ENCODE measurements at regions of chr4 and their contacts with region 1.

Region 1: DNA sequence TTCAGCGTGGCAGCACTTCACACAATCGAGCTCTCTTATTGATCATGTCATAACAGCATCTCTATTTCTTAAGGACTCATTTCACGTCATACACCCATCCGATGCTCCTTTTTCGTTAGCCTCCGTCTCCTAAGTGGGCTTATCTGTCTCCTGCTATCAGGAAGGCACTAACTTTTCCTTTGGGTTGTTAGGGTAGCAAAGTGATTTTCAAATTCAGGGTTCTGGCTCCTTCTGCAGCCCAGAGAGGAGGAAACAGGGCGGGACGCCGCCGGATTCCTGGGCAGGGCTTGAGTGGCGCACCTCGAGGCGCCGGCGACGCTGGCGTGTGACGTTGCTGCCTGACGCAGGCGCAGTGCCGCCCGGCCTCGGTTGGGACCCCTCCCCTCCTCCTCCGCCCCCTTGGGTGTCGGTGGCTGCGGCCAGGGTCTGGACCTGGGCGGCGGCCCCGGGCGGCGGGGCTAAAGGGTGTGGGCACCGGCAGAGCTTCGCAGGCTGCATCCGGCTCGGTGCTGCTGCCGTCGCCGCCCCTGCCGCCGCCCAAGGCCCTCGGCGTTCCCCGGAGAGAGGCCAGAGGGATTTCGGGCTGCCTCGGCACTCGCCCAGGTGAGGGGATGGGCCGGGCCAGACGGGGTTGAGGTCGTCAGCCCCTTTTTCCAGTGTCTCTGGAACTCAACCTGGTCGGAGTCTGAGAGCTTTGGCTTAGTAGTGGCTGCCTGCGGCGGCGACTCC is at the start of gene BLTP1:
- DNase-seq: peak; percentile 80 to 94
- ATAC-seq: peak; percentile 92 to 96 (median 94)
- H3K4me3 ChIP-seq: peak within 1 kb of the TSS; percentile 82
- H3K4me3 Mint-ChIP-seq: peak within 1 kb of the TSS; percentile 98
- H3K27ac ChIP-seq: peak within 1 kb of the TSS; percentile 83
- H3K27ac Mint-ChIP-seq: peak within 1 kb of the TSS; percentile 94
- H3K4me1 ChIP-seq: no peaks in the 10 kb centered on the region
- H3K4me1 Mint-ChIP-seq: peaks cover 40 to 50% of the 10 kb centered on the region in 2 donors
- H3K27me3 ChIP-seq: no peaks in the 10 kb centered on the region
- H3K27me3 Mint-ChIP-seq: peaks cover 0 to 5% of the 10 kb centered on the region in 2 donors
- CTCF ChIP-seq: no peak
- total RNA-seq, gene BLTP1: 117 to 130 (median 124) TPM

Region 2: GRCh38 chr4:121950212-121950679 is 201.9 kb before region 1 on chr4:
- intact Hi-C with region 1: loop called (anchors 1 kb)
- DNase-seq: peak; percentile 66 to 89
- ATAC-seq: peak; percentile 81 to 85 (median 81)
- H3K4me3 ChIP-seq: peak overlapping the region; percentile 45
- H3K4me3 Mint-ChIP-seq: peak overlapping the region; percentile 91
- H3K27ac ChIP-seq: no peak overlapping the region
- H3K27ac Mint-ChIP-seq: peak overlapping the region in 1 of 2 donors; percentile 39
- H3K4me1 ChIP-seq: peaks cover 14% of the 10 kb centered on the region
- H3K4me1 Mint-ChIP-seq: peaks cover 6 to 16% of the 10 kb centered on the region in 2 donors
- H3K27me3 ChIP-seq: peaks cover 13% of the 10 kb centered on the region
- H3K27me3 Mint-ChIP-seq: peaks cover 49 to 62% of the 10 kb centered on the region in 2 donors
- CTCF ChIP-seq: peak; percentile 77

Region 3: DNA sequence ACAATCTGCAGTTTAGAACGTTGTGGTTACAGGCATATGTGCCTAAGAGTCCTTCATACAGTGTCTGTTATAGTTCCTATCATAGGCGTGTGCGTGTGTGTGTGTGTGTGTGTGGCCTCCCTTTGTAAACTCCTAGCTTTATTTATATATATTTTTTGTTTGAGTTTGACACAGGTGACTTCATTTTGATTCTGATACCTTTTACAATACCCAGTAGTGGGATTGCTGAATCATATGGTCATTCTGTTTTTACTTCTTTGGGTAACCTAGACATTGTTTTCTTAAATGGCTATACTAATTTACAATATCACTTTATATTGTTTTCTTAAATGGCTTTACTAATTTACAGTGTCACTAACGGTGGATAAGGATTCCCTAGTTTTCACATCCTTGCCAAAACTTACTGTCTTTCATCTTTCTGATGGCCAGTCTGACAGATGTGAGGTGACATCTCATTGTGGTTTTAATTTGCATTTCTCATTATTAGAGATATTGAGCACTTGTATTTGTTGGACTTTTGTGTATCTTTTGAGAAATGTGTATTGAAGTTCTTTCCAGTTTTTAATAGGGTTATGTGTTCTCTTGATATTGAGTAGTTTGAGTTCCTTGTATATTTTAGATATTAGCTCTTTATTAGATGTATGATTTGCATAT is 981.4 kb after region 1 on chr4:
- intact Hi-C with region 1: no loop called
- DNase-seq: no peak
- ATAC-seq: no peak
- H3K4me3 ChIP-seq: no peak overlapping the region
- H3K4me3 Mint-ChIP-seq: no peak overlapping the region
- H3K27ac ChIP-seq: no peak overlapping the region
- H3K27ac Mint-ChIP-seq: no peak overlapping the region
- H3K4me1 ChIP-seq: no peaks in the 10 kb centered on the region
- H3K4me1 Mint-ChIP-seq: no peaks in the 10 kb centered on the region
- H3K27me3 ChIP-seq: no peaks in the 10 kb centered on the region
- H3K27me3 Mint-ChIP-seq: no peaks in the 10 kb centered on the region
- CTCF ChIP-seq: no peak